Activated B cell treated with CpG ODN at 0.5 μM for 24 hours (primary cell): ENCODE measurements at regions of chr19 and their contacts with region 1.

Region 1: GRCh38 chr19:45643024-45643926 is 4.1 kb upstream of the EML2 start:
- DNase-seq: peak; percentile 92
- ATAC-seq: peak; percentile 41
- H3K4me3 Mint-ChIP-seq: peak overlapping the region; percentile 80
- H3K27ac Mint-ChIP-seq: peak overlapping the region; percentile 97
- H3K4me1 Mint-ChIP-seq: peaks cover 50% of the 10 kb centered on the region
- H3K27me3 Mint-ChIP-seq: no peaks in the 10 kb centered on the region
- CTCF ChIP-seq: no peak

Region 2: DNA sequence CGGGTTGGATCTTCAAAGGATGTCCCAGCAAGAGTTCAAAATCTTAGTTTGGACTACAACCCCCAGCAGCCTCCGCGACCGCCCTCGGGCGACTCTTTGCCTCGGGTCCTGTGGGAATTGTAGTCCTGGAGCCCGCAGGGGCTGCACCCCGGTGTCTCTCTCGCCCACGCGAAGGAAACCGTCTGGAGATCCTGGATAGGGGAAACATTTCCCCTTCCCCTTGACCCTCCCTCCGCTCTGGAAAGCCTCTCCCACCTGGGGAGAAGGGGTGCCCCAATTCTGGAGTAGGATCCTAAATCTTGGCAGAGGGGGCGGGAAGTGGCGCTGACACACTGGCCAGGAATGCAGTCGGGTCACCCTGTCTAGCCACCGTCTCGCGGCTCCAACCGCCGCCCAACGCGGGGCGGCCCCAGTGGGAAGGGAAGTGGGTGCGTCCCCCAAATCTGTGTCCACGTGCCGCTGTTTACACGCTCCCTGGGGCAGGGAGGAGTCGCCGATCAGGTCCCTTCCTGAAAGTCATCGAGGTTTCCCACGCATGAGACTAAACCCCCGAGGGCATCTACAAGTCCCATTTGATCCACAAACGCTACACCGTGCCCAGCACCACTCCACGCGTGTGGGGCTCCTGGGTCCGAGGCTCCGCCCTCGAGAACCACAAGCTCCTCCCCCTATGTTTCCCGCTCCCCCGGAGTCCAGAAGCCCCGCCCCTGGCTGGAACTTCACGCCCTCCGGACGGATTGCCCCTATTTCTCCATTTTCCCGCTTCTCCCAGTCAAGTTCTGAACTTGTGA is 237.6 kb before region 1 on chr19:
- CTCF ChIA-PET with region 1: no interaction called
- POLR2A ChIA-PET with region 1: interaction called, 3 read pairs
- intact Hi-C with region 1: loop called (anchors 10 kb)
- DNase-seq: peak; percentile 76
- ATAC-seq: peak; percentile 65
- H3K4me3 Mint-ChIP-seq: peak overlapping the region; percentile 96
- H3K27ac Mint-ChIP-seq: peak overlapping the region; percentile 95
- H3K4me1 Mint-ChIP-seq: peaks cover 43% of the 10 kb centered on the region
- H3K27me3 Mint-ChIP-seq: peaks cover 12% of the 10 kb centered on the region
- CTCF ChIP-seq: no peak

Region 3: GRCh38 chr19:45478454-45479238 is 164.6 kb before region 1 on chr19:
- CTCF ChIA-PET with region 1: interaction called, 5 read pairs
- POLR2A ChIA-PET with region 1: interaction called, 13 read pairs
- intact Hi-C with region 1: no loop called
- DNase-seq: peak; percentile 79
- ATAC-seq: peak; percentile 81
- H3K4me3 Mint-ChIP-seq: peak overlapping the region; percentile 89
- H3K27ac Mint-ChIP-seq: peak overlapping the region; percentile 97
- H3K4me1 Mint-ChIP-seq: peaks cover 21% of the 10 kb centered on the region
- H3K27me3 Mint-ChIP-seq: peaks cover 14% of the 10 kb centered on the region
- CTCF ChIP-seq: peak; percentile 72

Region 4: GRCh38 chr19:45506246-45506990 is 136.9 kb before region 1 on chr19:
- CTCF ChIA-PET with region 1: no interaction called
- POLR2A ChIA-PET with region 1: interaction called, 8 read pairs
- intact Hi-C with region 1: loop called (anchors 1 kb)
- DNase-seq: peak; percentile 99
- ATAC-seq: peak; percentile 72
- H3K4me3 Mint-ChIP-seq: peak overlapping the region; percentile 92
- H3K27ac Mint-ChIP-seq: peak overlapping the region; percentile 97
- H3K4me1 Mint-ChIP-seq: peaks cover 54% of the 10 kb centered on the region
- H3K27me3 Mint-ChIP-seq: no peaks in the 10 kb centered on the region
- CTCF ChIP-seq: no peak

Region 5: DNA sequence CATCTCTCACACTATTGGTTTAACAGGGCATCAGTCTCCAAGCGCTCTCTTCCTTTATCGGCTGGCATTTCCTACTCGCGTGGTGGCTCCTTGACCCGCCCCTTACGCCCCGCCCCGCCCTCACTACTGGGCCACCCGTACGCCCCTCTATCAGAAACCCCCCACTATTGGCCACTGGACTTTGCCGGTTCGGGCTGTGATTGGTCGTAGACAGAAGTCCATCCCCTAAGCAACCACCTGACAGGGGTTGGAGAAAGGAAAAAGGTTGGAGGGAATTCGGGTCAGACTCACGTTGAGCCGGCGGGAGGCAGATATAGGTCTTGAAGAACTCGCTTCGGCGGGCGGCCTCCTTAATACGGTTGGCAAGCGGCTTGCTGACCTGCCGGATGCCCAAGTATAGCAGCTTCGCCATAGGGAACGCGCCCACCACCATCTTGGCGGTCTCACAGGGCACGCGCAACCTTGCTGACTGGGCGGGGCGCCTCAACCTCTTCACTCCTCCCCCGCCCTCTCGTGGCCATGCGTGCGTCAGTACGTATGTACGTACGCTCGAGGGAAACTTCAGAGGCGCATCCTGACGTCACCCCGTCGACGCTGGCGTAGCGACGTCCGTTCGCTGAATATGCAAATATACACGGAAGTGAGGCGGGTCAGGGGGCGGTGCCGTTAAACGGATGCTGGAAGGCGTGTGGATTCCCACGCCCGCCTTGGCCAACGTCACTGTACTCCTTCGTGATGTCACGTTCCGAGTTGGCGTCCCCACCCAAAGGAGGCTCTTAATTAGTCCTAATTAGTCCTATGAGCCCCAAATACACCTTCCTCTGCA is 58.7 kb before region 1 on chr19 and contains the start of gene OPA3:
- CTCF ChIA-PET with region 1: interaction called, 5 read pairs
- POLR2A ChIA-PET with region 1: interaction called, 18 read pairs
- intact Hi-C with region 1: loop called (anchors 1 kb)
- DNase-seq: peak; percentile 94
- ATAC-seq: peak; percentile 89
- H3K4me3 Mint-ChIP-seq: peak within 1 kb of the TSS; percentile 96
- H3K27ac Mint-ChIP-seq: peak within 1 kb of the TSS; percentile 98
- H3K4me1 Mint-ChIP-seq: peaks cover 13% of the 10 kb centered on the region
- H3K27me3 Mint-ChIP-seq: peaks cover 5% of the 10 kb centered on the region
- CTCF ChIP-seq: no peak
- total RNA-seq, gene OPA3: 12.0 and 14.4 TPM in 2 replicates

Region 6: DNA sequence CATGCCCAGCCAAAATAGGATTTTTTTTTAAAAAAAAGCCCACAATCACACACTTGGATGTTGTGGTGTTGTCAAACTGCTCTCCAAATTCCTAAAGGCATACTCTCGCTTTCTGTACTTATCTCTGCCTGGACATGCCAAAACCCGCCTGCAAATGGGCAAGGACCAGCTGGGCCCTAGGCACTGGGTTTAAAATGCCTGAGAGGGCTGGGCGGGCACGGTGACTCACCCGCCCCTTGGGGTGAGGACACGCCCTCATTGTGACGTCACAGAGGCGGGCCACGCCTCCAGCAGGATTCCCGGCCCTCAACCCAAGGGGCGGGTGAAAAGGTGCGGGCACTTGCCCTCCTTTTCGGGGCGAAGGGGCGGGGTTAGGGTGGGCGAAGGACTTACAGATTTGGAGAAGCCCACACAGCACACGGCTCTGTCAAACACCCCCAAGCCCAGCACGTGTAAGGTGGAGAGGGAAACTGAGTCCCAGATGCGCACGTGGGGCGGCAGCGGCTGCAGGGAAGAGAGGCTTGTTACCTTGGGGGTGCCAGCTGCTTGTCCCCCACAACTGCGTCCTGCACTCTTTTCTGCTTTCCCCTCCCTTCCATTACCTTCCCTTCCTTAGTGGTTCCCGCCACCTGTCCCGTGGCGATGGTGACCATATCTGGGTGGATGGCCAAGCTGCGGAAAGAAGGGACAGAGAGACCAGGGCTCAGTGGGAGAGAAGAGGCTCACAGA is 10.6 kb before region 1 on chr19:
- CTCF ChIA-PET with region 1: interaction called, 6 read pairs
- POLR2A ChIA-PET with region 1: interaction called, 16 read pairs
- intact Hi-C with region 1: loop called (anchors 1 kb)
- DNase-seq: peak; percentile 42
- ATAC-seq: peak; percentile 42
- H3K4me3 Mint-ChIP-seq: no peak overlapping the region
- H3K27ac Mint-ChIP-seq: no peak overlapping the region
- H3K4me1 Mint-ChIP-seq: peaks cover 14% of the 10 kb centered on the region
- H3K27me3 Mint-ChIP-seq: no peaks in the 10 kb centered on the region
- CTCF ChIP-seq: no peak

Region 7: GRCh38 chr19:45692187-45693105 is 49.2 kb after region 1 on chr19 and contains the start of gene QPCTL:
- CTCF ChIA-PET with region 1: interaction called, 11 read pairs
- POLR2A ChIA-PET with region 1: interaction called, 30 read pairs
- intact Hi-C with region 1: loop called (anchors 1 kb)
- DNase-seq: peak; percentile 90
- ATAC-seq: peak; percentile 86
- H3K4me3 Mint-ChIP-seq: peak within 1 kb of the TSS; percentile 94
- H3K27ac Mint-ChIP-seq: peak within 1 kb of the TSS; percentile 98
- H3K4me1 Mint-ChIP-seq: peaks cover 30% of the 10 kb centered on the region
- H3K27me3 Mint-ChIP-seq: no peaks in the 10 kb centered on the region
- CTCF ChIP-seq: no peak
- total RNA-seq, gene QPCTL: 19.3 and 21.1 TPM in 2 replicates

Region 8: DNA sequence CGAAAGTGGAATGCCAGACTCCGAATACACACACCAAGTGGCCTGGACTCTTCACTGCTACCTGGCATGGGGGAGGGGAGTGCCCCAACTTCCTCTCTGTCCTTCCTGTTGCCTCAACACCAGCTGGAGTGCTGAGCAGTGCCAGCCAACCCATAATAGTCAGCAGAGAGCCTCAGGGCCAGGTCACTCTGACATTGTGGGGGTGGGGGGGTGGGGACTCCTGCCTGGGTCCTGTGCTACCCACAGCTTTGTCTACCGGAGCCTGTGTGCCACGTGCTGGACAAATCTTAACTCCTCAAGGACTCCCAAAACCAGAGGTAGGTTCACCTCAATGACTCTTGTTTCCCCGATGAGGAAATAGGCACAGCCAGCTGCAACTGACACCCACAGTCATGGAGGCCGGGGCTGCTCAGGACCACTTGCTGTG is 1693.6 kb after region 1 on chr19:
- CTCF ChIA-PET with region 1: no interaction called
- POLR2A ChIA-PET with region 1: no interaction called
- intact Hi-C with region 1: no loop called
- DNase-seq: no peak
- ATAC-seq: peak; percentile 54
- H3K4me3 Mint-ChIP-seq: no peak overlapping the region
- H3K27ac Mint-ChIP-seq: no peak overlapping the region
- H3K4me1 Mint-ChIP-seq: peaks cover 7% of the 10 kb centered on the region
- H3K27me3 Mint-ChIP-seq: peaks cover 5% of the 10 kb centered on the region
- CTCF ChIP-seq: no peak